ENCODE measurements at regions of chr17 and their contacts with region 1.

Region 1: DNA sequence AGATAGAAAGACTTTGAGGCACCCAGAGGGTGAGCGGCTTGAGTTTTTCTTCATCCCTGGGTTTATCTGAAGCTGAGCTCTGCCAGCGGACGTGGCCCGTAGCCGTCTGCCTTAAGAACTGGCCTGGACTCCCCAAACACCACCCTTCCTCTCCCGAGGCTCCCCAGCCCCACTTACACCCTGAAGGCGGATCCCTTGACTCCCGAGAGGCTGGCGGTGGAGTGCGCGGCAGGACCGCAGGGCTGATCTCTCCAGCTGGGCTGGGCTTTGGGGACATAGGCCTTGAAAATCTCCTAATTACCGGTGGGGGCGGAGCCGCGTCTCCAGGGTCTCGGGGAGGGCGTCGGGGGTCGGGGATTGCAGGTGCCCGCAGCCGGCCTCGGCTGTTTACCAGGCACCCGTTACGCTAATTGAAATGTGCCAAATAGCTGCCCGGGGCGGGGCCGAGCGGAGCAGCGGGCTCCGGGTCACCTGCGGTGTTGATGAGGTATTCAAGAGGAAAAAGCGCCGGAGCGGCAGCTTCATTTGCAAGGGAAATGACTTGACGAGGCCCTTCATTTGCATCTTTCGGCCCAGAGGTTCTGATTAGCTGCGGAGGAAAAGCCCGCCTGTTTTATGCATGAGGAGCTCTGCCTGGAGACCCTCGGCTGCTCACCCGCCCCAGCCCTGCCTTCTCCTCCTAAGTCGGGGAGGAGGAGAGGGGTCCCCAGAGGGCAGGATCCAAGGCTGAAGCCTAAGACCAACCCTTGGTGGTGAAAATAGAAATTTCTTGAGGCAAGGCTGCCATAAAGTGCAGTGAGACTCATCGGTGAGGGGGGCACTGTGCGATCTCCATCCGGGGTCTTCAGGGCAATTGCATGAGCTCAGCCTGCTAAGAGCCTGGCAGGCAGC is 100.7 kb downstream of the MGAT5B start:
- DNase-seq: no peak
- H3K4me3 ChIP-seq: no peak overlapping the region
- H3K27ac ChIP-seq: no peak overlapping the region
- H3K27me3 ChIP-seq: peaks cover 72% of the 10 kb centered on the region
- CTCF ChIP-seq: no peak

Region 2: GRCh38 chr17:77164483-77165091 is 195.6 kb after region 1 on chr17:
- CTCF ChIA-PET with region 1: no interaction called
- POLR2A ChIA-PET with region 1: interaction called, 10 read pairs
- DNase-seq: no peak
- H3K4me3 ChIP-seq: no peak overlapping the region
- H3K27ac ChIP-seq: peak overlapping the region; percentile 68
- H3K27me3 ChIP-seq: no peaks in the 10 kb centered on the region
- CTCF ChIP-seq: no peak